A549 (cell line): ENCODE measurements at regions of chrX and their contacts with region 1.

Region 1: GRCh38 chrX:106894392-106894909 is 8.7 kb downstream of the RIPPLY1 start:
- DNase-seq: peak; percentile 50 to 84
- ATAC-seq: peak; percentile 92 to 94
- H3K4me3 ChIP-seq: no peak overlapping the region
- H3K27ac ChIP-seq: peak overlapping the region; percentile 88 to 90
- H3K4me1 ChIP-seq: peaks cover 56% of the 10 kb centered on the region
- CTCF ChIP-seq: peak; percentile 84
- EP300 ChIP-seq: no peak
- POLR2A ChIP-seq: no peak
- RAD21 ChIP-seq: peak; percentile 89 to 93

Region 2: DNA sequence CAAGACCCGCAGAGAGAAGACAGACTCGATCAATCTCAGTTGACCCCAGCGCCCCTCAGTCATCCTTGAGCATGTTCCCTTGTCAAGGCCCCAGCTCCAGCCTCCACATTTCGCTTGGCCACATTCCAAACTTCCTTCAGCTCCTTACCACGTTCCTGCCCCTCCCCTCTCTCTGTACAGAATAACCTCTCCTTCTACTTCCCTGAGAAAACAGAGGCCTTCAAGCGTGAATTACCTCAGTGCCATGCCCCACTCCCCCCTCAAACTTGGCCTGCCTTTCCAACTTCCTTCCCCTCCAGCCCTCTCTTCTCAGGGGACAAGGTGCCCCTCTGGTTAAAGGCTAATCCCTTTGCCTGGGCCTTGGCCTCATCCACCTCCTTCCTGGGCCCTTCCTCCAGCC is 11.9 kb after region 1 on chrX:
- CTCF ChIA-PET with region 1: interaction called, 58 read pairs
- POLR2A ChIA-PET with region 1: no interaction called
- DNase-seq: no peak
- ATAC-seq: no peak
- H3K4me3 ChIP-seq: no peak overlapping the region
- H3K27ac ChIP-seq: peak overlapping the region in 1 of 2 experiments; percentile 75; a peak in 3 of 6 replicates
- H3K4me1 ChIP-seq: 0 out of 3 replicates have a peak, but pooled peaks cover 3% of the 10 kb centered on the region
- CTCF ChIP-seq: no peak
- EP300 ChIP-seq: no peak
- POLR2A ChIP-seq: no peak
- RAD21 ChIP-seq: no peak

Region 3: DNA sequence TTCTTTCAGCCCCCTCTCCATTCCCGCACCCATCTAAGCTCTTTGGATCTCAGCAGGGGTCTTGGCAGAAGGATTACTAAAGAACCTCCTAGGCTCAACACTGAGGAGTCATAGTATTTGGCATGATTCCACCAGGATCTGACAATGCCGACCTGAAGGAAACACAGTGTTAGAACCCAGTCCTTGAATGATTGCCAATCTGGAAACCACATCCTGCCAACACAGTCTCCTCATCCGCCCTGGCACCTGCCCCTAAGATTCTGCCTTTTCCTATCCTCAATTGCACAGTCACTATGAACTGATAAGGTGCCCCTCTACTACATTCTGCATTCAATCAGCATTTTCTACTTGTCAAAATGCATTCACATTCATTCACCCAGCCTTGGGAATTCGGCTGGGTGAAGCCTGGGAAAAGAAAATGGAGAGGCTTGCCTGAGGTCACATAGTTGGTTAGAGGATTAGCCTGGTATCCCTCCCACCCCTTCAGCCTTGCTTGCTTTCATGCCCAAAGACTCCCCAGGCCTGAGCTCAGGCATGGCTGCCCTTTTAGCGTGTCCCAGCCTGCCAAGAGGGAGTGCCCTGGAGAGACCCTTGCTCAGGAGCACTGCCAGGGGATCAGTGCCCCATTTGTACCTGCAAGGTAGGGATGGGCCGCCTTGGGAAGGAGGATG is 23.5 kb after region 1 on chrX:
- CTCF ChIA-PET with region 1: interaction called, 58 read pairs
- POLR2A ChIA-PET with region 1: no interaction called
- DNase-seq: peak; percentile 60 to 84
- ATAC-seq: peak; percentile 80 to 87
- H3K4me3 ChIP-seq: no peak overlapping the region
- H3K27ac ChIP-seq: peak overlapping the region; percentile 92
- H3K4me1 ChIP-seq: peaks cover 70% of the 10 kb centered on the region
- CTCF ChIP-seq: no peak
- EP300 ChIP-seq: peak; percentile 90 to 94
- POLR2A ChIP-seq: no peak
- RAD21 ChIP-seq: peak in 1 of 2 experiments; percentile 35; a peak in 2 of 5 replicates

Region 4: DNA sequence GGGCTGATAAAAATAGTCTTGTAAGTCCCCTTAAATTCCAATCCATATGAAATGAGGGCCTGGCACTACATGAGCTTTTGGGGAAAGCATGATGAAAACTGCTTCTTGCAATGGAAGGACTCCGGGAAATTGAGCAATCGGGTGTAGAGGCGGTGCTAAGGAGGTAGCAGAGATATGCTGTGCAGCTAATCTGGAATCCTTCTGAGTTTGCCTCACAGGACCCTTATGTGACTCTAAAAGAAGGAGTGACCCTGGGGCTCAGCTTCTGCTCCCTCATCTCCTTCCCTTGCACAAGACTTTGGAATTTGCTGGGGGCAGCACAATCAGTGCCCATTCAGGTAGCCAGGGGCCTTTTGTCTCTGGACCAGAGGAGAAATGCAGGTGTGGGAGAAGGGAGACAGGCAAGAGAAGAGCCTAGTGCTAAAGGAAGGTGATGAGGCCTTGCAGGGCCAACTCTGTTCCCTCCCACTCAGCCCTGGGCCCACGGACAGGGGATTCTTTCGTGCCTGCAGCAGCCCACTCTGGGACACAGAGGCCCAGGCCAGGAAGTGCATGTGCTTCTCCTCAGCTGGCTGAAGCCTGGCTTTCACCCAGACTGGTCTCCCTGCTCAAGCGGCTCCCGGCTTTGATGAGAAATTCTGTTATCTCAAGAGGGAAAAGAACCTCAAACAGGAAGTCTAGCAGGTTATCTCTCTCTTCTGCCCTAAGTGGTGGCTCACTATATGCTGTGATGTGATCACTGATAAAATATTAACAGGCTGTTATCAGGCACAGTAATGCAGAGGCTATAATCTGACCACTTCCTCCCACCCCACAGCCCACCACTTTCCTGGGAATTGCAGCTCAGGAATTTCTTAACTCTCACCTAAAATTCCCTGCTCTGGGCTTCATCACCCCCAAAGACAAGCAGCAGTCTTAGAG is 38.9 kb after region 1 on chrX:
- CTCF ChIA-PET with region 1: interaction called, 38 read pairs
- POLR2A ChIA-PET with region 1: interaction called, 3 read pairs
- DNase-seq: peak; percentile 61 to 77
- ATAC-seq: peak; percentile 73 to 87
- H3K4me3 ChIP-seq: no peak overlapping the region
- H3K27ac ChIP-seq: peak overlapping the region; percentile 92 to 99
- H3K4me1 ChIP-seq: peaks cover 93% of the 10 kb centered on the region
- CTCF ChIP-seq: no peak
- EP300 ChIP-seq: peak; percentile 88 to 89; a peak in 4 of 5 replicates
- POLR2A ChIP-seq: no peak
- RAD21 ChIP-seq: no peak

Region 5: DNA sequence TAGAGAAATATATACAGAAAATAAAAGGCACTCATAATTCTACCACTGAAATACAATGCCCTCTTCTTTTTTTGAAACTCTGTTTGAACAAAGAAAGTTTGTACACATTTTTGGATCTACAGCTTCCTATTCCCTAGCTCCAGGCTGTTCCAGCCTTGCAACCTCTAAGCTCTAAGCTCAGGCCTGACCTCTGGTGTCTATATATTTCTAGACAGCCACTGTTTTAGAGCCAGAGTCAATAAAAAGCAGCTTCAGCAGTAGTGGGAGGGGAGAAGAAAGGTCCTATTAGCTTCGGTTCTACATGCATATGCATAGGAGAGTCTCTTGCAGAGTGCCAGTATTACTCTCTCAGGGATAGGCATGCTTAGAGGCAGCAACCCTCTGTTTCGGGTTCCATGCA is 65.5 kb after region 1 on chrX:
- CTCF ChIA-PET with region 1: interaction called, 94 read pairs
- POLR2A ChIA-PET with region 1: interaction called, 8 read pairs
- DNase-seq: peak; percentile 39 to 62
- ATAC-seq: peak; percentile 91 to 92
- H3K4me3 ChIP-seq: no peak overlapping the region
- H3K27ac ChIP-seq: peak overlapping the region; percentile 61 to 82
- H3K4me1 ChIP-seq: peaks cover 57% of the 10 kb centered on the region
- CTCF ChIP-seq: peak; percentile 57
- EP300 ChIP-seq: no peak
- POLR2A ChIP-seq: no peak
- RAD21 ChIP-seq: peak; percentile 75 to 77